CD8-positive, alpha-beta memory T cell (primary cell): ENCODE measurements at regions of chr10 and their contacts with region 1.

Region 1: DNA sequence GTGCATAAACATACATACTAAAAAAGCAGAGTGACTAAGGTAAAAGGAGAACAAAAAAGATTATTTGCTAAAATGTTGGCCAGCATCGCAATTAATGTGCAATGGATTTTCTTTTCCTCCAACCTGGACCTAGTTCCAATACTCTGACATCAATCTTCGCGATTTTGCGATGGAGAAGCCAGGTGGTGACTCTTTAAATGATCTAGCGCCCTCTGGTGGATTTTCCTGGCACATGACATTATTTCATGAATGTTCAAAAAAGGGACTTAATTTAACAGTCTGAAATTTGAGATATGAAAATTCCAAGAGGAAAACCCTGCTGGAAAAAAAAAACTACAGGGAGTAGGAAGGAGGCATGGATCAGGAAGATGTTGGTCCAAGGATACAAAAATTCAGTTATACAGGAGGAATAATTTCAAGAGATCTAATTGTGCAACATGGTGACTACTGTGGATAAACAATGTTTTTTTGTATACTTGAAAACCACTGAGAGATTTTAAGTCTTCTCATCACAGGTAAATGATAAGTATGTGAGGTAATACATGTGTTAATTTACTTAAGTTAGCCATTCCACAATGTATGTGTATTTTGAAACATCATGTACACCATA is 4.3 kb upstream of the KCNMA1 start:
- DNase-seq: peak in 4 of 5 donors; percentile 20 to 43 (median 34)
- H3K4me3 ChIP-seq: no peak overlapping the region
- H3K4me3 Mint-ChIP-seq: no peak overlapping the region
- H3K27ac ChIP-seq: no peak overlapping the region
- H3K27ac Mint-ChIP-seq: no peak overlapping the region
- H3K4me1 ChIP-seq: no peaks in the 10 kb centered on the region
- H3K4me1 Mint-ChIP-seq: peaks cover 4 to 13% (median 8%) of the 10 kb centered on the region in 3 donors
- H3K27me3 ChIP-seq: peaks cover 11% of the 10 kb centered on the region
- H3K27me3 Mint-ChIP-seq: peaks cover 35 to 40% of the 10 kb centered on the region in 2 donors

Region 2: GRCh38 chr10:77173615-77174461 is 468.1 kb before region 1 on chr10:
- CTCF ChIA-PET with region 1: interaction called, 113 read pairs
- POLR2A ChIA-PET with region 1: no interaction called
- DNase-seq: peak; percentile 36 to 73 (median 54)
- H3K4me3 ChIP-seq: no peak overlapping the region
- H3K4me3 Mint-ChIP-seq: no peak overlapping the region
- H3K27ac ChIP-seq: no peak overlapping the region
- H3K27ac Mint-ChIP-seq: peak overlapping the region in 1 of 8 donors; percentile 35
- H3K4me1 ChIP-seq: no peaks in the 10 kb centered on the region
- H3K4me1 Mint-ChIP-seq: no peaks in the 10 kb centered on the region
- H3K27me3 ChIP-seq: no peaks in the 10 kb centered on the region
- H3K27me3 Mint-ChIP-seq: peaks cover 5 to 14% of the 10 kb centered on the region in 2 donors

Region 3: GRCh38 chr10:77537720-77538359 is 104.1 kb before region 1 on chr10:
- CTCF ChIA-PET with region 1: no interaction called
- POLR2A ChIA-PET with region 1: no interaction called
- DNase-seq: no peak
- H3K4me3 ChIP-seq: no peak overlapping the region
- H3K4me3 Mint-ChIP-seq: no peak overlapping the region
- H3K27ac ChIP-seq: no peak overlapping the region
- H3K27ac Mint-ChIP-seq: no peak overlapping the region
- H3K4me1 ChIP-seq: no peaks in the 10 kb centered on the region
- H3K4me1 Mint-ChIP-seq: no peaks in the 10 kb centered on the region
- H3K27me3 ChIP-seq: no peaks in the 10 kb centered on the region
- H3K27me3 Mint-ChIP-seq: peaks cover 7 to 9% of the 10 kb centered on the region in 2 donors

Region 4: GRCh38 chr10:77592946-77593636 is 48.8 kb before region 1 on chr10:
- CTCF ChIA-PET with region 1: no interaction called
- POLR2A ChIA-PET with region 1: no interaction called
- DNase-seq: no peak
- H3K4me3 ChIP-seq: no peak overlapping the region
- H3K4me3 Mint-ChIP-seq: no peak overlapping the region
- H3K27ac ChIP-seq: no peak overlapping the region
- H3K27ac Mint-ChIP-seq: no peak overlapping the region
- H3K4me1 ChIP-seq: no peaks in the 10 kb centered on the region
- H3K4me1 Mint-ChIP-seq: no peaks in the 10 kb centered on the region
- H3K27me3 ChIP-seq: no peaks in the 10 kb centered on the region
- H3K27me3 Mint-ChIP-seq: peaks cover 0 to 3% of the 10 kb centered on the region in 2 donors

Region 5: DNA sequence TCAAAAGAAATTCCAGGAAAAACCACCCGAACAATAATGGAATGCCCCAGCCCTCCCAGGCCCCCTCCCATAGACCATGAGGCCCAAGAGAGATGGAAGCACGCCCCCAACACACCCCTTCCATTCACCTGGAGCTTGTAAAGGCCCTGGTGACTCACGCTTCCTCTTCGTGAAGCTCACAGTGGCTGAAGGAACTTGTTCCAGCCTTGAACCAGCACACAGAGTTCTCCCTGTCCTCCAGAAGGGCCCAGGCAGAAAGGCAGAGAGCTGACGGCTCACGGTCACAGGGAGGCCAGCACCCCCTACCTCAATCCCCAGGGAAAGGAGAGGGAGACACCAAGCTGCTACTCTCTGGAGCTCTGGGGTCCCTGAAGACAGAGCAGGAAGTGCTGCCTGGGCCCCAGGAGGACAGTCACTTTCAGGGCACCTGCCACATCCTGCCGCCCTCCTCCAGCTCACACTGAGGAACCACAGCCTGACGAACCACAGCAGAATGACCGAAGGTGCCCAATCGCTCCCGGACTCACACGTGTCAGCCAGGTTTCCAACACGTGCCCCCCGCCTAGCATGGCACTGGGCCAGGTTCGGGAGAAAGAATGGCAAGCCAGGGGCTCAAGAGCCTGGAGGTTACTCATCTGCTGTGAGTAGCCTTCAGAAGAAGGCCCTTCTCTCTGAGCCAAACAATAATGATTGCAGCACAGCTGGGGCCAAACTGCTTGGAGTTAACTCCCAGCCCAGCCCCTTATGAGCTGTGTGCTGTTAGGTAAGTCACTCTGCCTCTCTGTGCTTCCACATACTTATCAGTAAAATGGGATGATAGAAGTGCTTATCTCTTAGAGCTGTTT is 231.9 kb after region 1 on chr10:
- CTCF ChIA-PET with region 1: no interaction called
- POLR2A ChIA-PET with region 1: no interaction called
- DNase-seq: peak; percentile 16 to 65 (median 39)
- H3K4me3 ChIP-seq: no peak overlapping the region
- H3K4me3 Mint-ChIP-seq: peak overlapping the region in 6 of 7 donors; percentile 31 to 82 (median 70)
- H3K27ac ChIP-seq: peak overlapping the region; percentile 27
- H3K27ac Mint-ChIP-seq: peak overlapping the region; percentile 75 to 97 (median 92)
- H3K4me1 ChIP-seq: peaks cover 28% of the 10 kb centered on the region
- H3K4me1 Mint-ChIP-seq: peaks cover 36 to 38% (median 37%) of the 10 kb centered on the region in 3 donors
- H3K27me3 ChIP-seq: no peaks in the 10 kb centered on the region
- H3K27me3 Mint-ChIP-seq: no peaks in the 10 kb centered on the region